AG04449 (cell line): ENCODE measurements at regions of chr5 and their contacts with region 1.

Region 1: DNA sequence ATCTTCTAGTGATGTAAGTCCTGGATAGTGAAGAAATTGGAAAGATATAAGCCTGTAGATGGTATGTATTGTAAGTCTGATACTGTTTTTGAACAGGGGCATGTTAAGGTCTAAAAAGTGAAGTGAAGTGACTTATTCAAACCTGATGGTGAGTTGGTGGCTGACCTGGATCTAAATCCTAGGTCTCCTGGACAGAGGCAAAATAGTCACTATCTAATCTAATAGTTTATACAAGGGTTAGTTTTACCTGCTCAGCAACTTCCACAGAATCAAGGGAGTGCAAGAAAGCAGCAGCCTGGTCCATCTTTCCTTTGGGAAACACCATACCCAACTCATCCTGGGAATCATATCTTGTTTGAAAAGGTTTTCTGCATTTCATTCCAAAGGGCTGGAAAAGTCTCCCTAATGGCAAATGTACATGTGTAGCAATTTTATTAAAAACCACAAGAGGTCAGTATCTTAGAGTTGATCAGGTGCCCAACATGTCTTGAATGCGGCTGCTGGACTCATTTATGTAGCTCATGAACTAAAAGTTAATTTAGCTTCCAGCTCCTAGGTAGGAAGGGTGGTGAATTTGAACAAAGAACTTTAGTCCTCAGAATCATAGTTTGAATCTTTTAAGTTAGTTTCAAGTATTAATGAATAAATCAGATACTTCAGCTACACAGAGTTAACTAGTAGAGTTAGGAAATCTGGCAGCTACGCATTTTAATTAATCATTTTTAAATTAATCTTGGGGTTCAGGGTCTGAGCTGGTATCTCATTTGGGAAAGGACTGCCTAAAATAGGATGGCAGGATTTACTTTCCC is 26.0 kb downstream of the SKP2 start:
- DNase-seq: no peak
- H3K4me3 ChIP-seq: no peak overlapping the region
- CTCF ChIP-seq: peak; percentile 33

Region 2: GRCh38 chr5:36202521-36202961 is 24.6 kb after region 1 on chr5:
- CTCF ChIA-PET with region 1: interaction called, 13 read pairs
- POLR2A ChIA-PET with region 1: no interaction called
- DNase-seq: no peak
- H3K4me3 ChIP-seq: no peak overlapping the region
- CTCF ChIP-seq: no peak

Region 3: GRCh38 chr5:36305571-36306326 is 127.8 kb after region 1 on chr5:
- CTCF ChIA-PET with region 1: interaction called, 32 read pairs
- POLR2A ChIA-PET with region 1: no interaction called
- DNase-seq: no peak
- H3K4me3 ChIP-seq: no peak overlapping the region
- CTCF ChIP-seq: peak; percentile 59

Region 4: DNA sequence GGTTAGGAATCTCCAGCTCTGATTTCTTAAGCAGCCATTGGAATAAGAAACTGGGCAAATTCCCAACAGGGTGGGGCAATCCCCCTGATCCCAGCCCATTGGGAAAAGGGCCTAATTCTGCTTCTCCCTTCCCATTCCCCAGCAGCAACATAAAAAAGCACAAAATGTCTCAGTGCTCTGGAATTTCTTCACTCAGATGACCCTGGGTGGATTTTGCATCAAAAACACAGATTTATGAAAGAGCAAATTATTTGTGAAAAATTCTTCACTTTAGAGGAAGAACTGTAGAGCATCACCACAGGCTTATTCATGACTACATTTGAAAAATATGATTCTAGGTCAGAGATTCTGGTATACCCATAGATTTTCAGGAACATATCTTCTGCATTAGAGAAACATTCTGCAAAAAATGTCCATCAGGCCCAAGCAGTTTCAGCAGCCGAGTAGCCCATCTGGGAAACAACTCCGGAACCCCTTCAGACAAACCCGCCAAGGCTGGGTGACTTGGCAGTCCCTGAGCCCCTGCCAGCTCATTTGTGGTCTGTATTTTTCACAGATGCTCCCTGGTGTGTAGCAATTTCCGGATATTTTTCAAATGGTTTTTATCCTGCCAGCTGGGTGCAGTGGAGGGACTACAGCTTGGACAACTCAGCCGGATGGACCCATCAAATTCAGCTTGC is 225.9 kb after region 1 on chr5:
- CTCF ChIA-PET with region 1: interaction called, 27 read pairs
- POLR2A ChIA-PET with region 1: no interaction called
- DNase-seq: peak; percentile 80
- H3K4me3 ChIP-seq: no peak overlapping the region
- CTCF ChIP-seq: no peak